ENCODE measurements at regions of chr20 and their contacts with region 1.

Region 1: GRCh38 chr20:32779500-32780211 is 17.5 kb downstream of the DNMT3B start:
- DNase-seq: no peak
- H3K4me3 ChIP-seq: no peak overlapping the region
- H3K27ac ChIP-seq: no peak overlapping the region
- H3K4me1 ChIP-seq: peaks cover 0 to 4% of the 10 kb centered on the region in 2 donors
- H3K27me3 ChIP-seq: no peaks in the 10 kb centered on the region
- CTCF ChIP-seq: no peak
- POLR2A ChIP-seq: no peak

Region 2: DNA sequence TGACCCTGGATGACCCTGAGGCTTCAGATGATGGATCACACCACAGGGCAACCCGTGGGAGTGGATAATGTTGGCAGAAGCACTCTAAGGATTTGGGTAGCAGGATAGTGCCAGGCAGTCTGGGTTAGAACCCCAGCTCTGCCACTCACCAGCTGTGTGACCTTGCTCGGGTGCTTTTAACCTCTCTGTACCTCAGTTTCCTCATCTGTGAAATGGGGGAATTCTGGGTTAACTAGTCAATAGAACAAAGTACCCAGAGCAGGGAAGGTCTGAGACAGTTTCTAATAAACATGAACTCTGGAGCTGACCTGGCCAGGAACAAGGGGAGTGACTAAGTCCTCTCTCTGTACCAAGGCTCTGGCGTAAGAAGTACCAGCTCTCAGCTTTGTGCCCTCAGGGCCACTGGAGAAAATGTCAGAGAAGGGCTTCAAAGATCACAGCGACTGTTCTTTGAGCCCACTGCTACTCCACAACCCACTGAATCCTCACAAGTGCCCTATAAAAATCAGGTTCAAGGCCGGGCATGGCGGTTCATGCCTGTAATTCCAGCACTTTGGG is 179.8 kb before region 1 on chr20:
- intact Hi-C with region 1: no loop called
- DNase-seq: no peak
- H3K4me3 ChIP-seq: no peak overlapping the region
- H3K27ac ChIP-seq: no peak overlapping the region
- H3K4me1 ChIP-seq: no peaks in the 10 kb centered on the region
- H3K27me3 ChIP-seq: no peaks in the 10 kb centered on the region
- CTCF ChIP-seq: no peak
- POLR2A ChIP-seq: no peak

Region 3: GRCh38 chr20:32674362-32674789 is 105.3 kb before region 1 on chr20:
- intact Hi-C with region 1: loop called (anchors 2 kb)
- DNase-seq: peak in 1 of 2 donors; percentile 68
- H3K4me3 ChIP-seq: no peak overlapping the region
- H3K27ac ChIP-seq: no peak overlapping the region
- H3K4me1 ChIP-seq: no peaks in the 10 kb centered on the region
- H3K27me3 ChIP-seq: no peaks in the 10 kb centered on the region
- CTCF ChIP-seq: peak in 2 of 3 donors; percentile 55 to 74
- POLR2A ChIP-seq: no peak

Region 4: DNA sequence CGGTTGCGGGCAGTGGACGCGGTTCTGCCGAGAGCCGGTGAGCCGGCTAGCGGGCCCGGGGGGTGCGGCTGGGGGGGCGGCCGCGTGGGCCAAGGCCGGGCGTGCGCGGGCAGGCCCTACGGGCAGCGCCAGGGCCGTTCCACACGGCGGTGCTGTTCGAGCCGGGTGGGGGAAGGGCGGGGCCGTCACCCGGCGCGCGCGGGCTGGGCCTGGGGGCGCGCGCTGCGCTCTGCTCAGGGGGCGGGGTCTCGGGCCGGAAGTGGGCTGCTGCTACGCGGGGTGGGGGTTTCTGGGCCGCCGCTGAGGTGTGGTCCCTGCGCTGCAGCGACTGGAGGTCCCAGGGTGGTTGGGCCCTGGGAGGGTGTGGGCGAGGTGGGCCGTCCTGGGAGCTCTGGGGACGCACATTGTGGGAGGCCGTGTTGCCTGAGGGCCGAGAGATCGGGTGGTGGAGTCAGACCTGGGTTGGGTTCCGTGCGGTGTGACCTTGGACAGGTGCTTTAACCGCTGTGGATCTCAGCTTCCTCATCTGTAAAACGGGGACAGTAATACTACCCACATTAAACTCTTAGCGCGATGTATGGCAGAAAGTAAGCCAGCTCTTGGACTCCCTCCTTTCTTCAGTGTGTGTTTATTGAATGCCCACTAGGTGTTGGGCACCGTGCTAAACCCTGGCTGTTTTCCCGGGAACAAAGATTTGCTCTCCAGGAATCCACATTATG is 40.5 kb after region 1 on chr20:
- intact Hi-C with region 1: loop called (anchors 2 kb)
- DNase-seq: peak in 1 of 2 donors; percentile 41
- H3K4me3 ChIP-seq: peak overlapping the region; percentile 75 to 95 (median 81)
- H3K27ac ChIP-seq: peak overlapping the region; percentile 96 to 98
- H3K4me1 ChIP-seq: no peaks in the 10 kb centered on the region
- H3K27me3 ChIP-seq: no peaks in the 10 kb centered on the region
- CTCF ChIP-seq: peak in 1 of 3 donors; percentile 14
- POLR2A ChIP-seq: no peak

Region 5: GRCh38 chr20:33119725-33120720 is 340.4 kb after region 1 on chr20:
- intact Hi-C with region 1: loop called (anchors 10 kb)
- DNase-seq: no peak
- H3K4me3 ChIP-seq: no peak overlapping the region
- H3K27ac ChIP-seq: no peak overlapping the region
- H3K4me1 ChIP-seq: no peaks in the 10 kb centered on the region
- H3K27me3 ChIP-seq: no peaks in the 10 kb centered on the region
- CTCF ChIP-seq: no peak
- POLR2A ChIP-seq: no peak

Region 6: DNA sequence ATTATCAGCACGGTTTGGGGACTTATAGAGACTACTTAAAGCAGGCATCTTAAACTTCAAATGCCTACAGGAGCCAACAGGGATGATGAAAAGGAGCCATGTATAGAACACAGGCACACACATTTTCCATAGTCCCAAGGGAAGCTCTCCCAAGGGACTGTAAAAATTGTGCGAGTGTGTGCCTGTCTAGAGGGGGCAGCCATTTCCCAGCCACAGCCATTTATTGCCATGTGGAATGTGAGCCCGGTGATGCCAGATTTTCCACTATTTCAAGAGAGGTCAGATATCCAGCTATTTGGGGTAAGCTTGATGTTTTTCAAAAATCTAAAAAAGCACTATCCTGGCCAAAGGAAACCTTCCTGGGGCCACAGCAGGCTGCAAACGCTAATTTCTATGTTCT is 1189.9 kb after region 1 on chr20:
- intact Hi-C with region 1: loop called (anchors 5 kb)
- DNase-seq: no peak
- H3K4me3 ChIP-seq: no peak overlapping the region
- H3K27ac ChIP-seq: no peak overlapping the region
- H3K4me1 ChIP-seq: no peaks in the 10 kb centered on the region
- H3K27me3 ChIP-seq: no peaks in the 10 kb centered on the region
- CTCF ChIP-seq: no peak
- POLR2A ChIP-seq: no peak

Measured in breast epithelium (tissue), 4 donors.